Esophagus muscularis mucosa (tissue), 4 donors: ENCODE measurements at regions of chr10 and their contacts with region 1.

Region 1: GRCh38 chr10:79195091-79195923 is 126.5 kb downstream of the ZMIZ1 start:
- DNase-seq: peak; percentile 97
- H3K4me3 ChIP-seq: peak overlapping the region in 3 of 4 donors; percentile 22 to 25 (median 22)
- H3K27ac ChIP-seq: peak overlapping the region; percentile 72 to 83 (median 78)
- H3K4me1 ChIP-seq: peaks cover 45 to 68% (median 65%) of the 10 kb centered on the region in 4 donors
- H3K27me3 ChIP-seq: no peaks in the 10 kb centered on the region
- CTCF ChIP-seq: peak; percentile 89 to 95 (median 93)
- EP300 ChIP-seq: no peak
- POLR2A ChIP-seq: no peak

Region 2: DNA sequence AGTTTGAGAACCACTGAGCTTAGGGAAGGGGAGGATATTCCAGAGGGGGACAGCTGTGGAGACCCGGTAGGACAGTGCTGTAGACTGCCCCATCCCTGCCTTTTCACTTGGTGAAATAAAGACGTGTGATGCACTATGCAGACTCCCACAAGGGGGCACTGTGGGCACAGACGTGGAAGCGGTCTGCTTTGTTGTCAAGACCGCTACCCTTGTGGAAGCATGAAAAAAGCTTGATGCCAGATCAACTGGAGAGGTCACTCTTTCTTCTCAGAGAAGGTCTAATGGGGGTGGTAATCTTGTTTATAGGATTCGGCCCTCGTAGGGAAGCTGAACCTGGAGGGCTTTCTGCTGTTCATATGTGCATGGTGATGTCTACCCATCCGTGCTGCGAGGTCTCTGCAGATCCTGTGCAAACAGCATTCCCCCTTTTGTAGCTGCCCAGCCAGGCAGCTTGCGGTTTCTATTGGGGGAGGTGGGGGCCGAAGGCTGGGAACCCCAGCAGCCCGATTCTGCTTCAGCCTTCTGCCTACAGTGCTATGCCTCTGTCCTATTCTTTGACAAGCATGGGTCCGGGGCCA is 1147.9 kb before region 1 on chr10:
- intact Hi-C with region 1: loop called (anchors 2 kb)
- DNase-seq: peak; percentile 96
- H3K4me3 ChIP-seq: no peak overlapping the region
- H3K27ac ChIP-seq: no peak overlapping the region
- H3K4me1 ChIP-seq: peaks cover 10 to 21% (median 14%) of the 10 kb centered on the region in 4 donors
- H3K27me3 ChIP-seq: no peaks in the 10 kb centered on the region
- CTCF ChIP-seq: peak; percentile 89 to 94 (median 93)
- EP300 ChIP-seq: no peak
- POLR2A ChIP-seq: no peak

Region 3: DNA sequence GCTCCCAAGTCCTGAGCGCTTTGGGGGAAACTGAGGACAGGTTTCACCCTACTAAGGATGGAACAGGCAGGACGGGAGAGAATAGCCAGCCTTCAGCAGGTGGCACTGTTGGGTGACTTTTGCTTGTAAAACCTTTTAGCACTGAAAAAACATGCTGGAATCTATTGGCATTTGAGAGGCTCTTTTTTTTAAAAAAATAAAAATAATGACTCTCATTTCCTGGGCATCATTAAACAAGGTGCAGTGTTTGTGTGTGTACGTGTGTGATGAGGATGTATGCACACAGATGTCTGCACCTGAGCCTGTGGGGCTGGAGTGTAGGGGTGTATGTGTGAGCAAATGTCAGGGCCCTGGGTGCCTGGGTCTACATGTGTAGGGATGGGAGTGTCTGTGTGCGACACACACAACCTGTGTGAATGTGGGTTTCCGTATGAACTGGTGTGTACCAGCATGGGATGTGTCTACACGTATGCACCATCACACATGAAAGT is 983.7 kb before region 1 on chr10:
- intact Hi-C with region 1: loop called (anchors 5 kb)
- DNase-seq: no peak
- H3K4me3 ChIP-seq: no peak overlapping the region
- H3K27ac ChIP-seq: peak overlapping the region; percentile 45 to 64 (median 60)
- H3K4me1 ChIP-seq: peaks cover 31 to 41% (median 38%) of the 10 kb centered on the region in 4 donors
- H3K27me3 ChIP-seq: no peaks in the 10 kb centered on the region
- CTCF ChIP-seq: peak; percentile 50 to 71 (median 64)
- EP300 ChIP-seq: no peak
- POLR2A ChIP-seq: no peak

Region 4: GRCh38 chr10:78302989-78303854 is 892.1 kb before region 1 on chr10:
- intact Hi-C with region 1: loop called (anchors 5 kb)
- DNase-seq: peak; percentile 96
- H3K4me3 ChIP-seq: peak overlapping the region; percentile 63 to 67 (median 66)
- H3K27ac ChIP-seq: peak overlapping the region; percentile 88 to 92 (median 90)
- H3K4me1 ChIP-seq: peaks cover 11 to 46% (median 27%) of the 10 kb centered on the region in 4 donors
- H3K27me3 ChIP-seq: no peaks in the 10 kb centered on the region
- CTCF ChIP-seq: peak; percentile 51 to 78 (median 55)
- EP300 ChIP-seq: no peak
- POLR2A ChIP-seq: peak; percentile 10

Region 5: DNA sequence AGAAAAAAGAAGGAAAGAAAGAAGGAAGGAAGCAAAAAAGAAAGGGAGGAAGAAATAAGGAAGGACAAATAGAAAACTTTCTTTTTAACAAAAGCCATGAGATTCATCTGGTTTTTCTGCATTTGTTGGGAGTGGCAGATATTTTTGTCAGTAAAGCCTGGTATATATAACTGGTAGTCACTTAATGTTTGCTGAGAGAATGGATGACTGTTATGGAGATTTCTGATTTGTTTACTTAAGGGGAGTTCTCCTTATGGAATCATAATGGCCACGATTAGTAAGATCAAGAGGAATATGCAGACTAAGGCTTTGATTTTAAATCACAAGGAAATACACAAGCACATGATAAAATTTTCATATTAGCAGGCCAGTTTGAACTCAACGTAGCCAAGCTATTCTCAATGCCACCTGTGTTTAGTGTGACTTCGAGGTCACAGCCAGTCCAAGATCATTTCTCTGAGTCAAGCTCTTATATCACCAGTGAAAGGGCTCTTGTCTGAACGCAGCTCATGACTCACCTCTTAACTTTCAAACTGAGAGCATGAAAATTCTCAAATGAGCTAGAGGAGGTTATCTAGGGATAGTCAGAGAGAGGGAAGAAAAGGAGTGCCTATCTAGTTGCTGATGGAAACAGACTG is 571.6 kb before region 1 on chr10:
- intact Hi-C with region 1: no loop called
- DNase-seq: no peak
- H3K4me3 ChIP-seq: no peak overlapping the region
- H3K27ac ChIP-seq: peak overlapping the region in 2 of 4 donors; percentile 10 to 37
- H3K4me1 ChIP-seq: peaks cover 9 to 34% (median 15%) of the 10 kb centered on the region in 4 donors
- H3K27me3 ChIP-seq: no peaks in the 10 kb centered on the region
- CTCF ChIP-seq: no peak
- EP300 ChIP-seq: no peak
- POLR2A ChIP-seq: no peak

Region 6: DNA sequence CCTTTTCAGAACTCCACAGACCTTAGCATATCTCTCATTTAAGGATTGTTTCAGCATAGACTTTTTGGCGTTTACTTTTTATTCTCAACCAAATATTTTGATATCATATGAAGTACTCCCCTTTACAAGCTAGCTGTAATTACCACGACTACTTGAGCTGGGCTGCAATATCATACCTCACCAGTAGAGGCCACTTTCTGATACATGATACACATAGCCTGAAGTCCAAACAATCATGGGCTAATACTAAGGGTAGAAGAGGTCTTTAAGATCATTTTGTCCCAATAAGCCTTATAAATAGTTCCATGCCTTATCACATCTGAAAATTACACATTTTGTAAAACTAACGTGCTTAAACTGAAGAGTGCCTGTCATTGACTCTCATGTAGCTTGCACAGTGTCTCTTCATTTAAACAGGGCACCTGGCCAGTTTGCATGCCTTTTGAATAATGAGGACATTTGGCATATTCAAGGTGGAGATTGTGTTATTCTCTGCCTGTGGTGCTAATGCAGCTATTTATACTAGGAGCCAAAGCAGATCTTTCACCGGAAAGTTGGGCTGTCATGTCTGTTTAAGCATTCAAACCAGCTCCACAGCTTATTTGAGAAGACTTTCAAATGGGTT is 530.3 kb before region 1 on chr10:
- intact Hi-C with region 1: loop called (anchors 5 kb)
- DNase-seq: no peak
- H3K4me3 ChIP-seq: no peak overlapping the region
- H3K27ac ChIP-seq: peak overlapping the region in 2 of 4 donors; percentile 43 to 56
- H3K4me1 ChIP-seq: peaks cover 0 to 20% (median 14%) of the 10 kb centered on the region in 4 donors
- H3K27me3 ChIP-seq: no peaks in the 10 kb centered on the region
- CTCF ChIP-seq: peak; percentile 62 to 80 (median 67)
- EP300 ChIP-seq: no peak
- POLR2A ChIP-seq: no peak

Region 7: GRCh38 chr10:78817361-78817760 is 377.9 kb before region 1 on chr10:
- intact Hi-C with region 1: no loop called
- DNase-seq: no peak
- H3K4me3 ChIP-seq: no peak overlapping the region
- H3K27ac ChIP-seq: no peak overlapping the region
- H3K4me1 ChIP-seq: peaks cover 3 to 15% (median 8%) of the 10 kb centered on the region in 4 donors
- H3K27me3 ChIP-seq: no peaks in the 10 kb centered on the region
- CTCF ChIP-seq: no peak
- EP300 ChIP-seq: no peak
- POLR2A ChIP-seq: no peak

Region 8: GRCh38 chr10:78972947-78973900 is 222.1 kb before region 1 on chr10:
- intact Hi-C with region 1: loop called (anchors 10 kb)
- DNase-seq: peak; percentile 94
- H3K4me3 ChIP-seq: peak overlapping the region; percentile 63 to 66 (median 65)
- H3K27ac ChIP-seq: peak overlapping the region; percentile 94 to 99 (median 97)
- H3K4me1 ChIP-seq: peaks cover 38 to 67% (median 55%) of the 10 kb centered on the region in 4 donors
- H3K27me3 ChIP-seq: no peaks in the 10 kb centered on the region
- CTCF ChIP-seq: no peak
- EP300 ChIP-seq: no peak
- POLR2A ChIP-seq: peak; percentile 25

Region 9: GRCh38 chr10:79084012-79084971 is 111.0 kb before region 1 on chr10:
- intact Hi-C with region 1: no loop called
- DNase-seq: peak; percentile 99
- H3K4me3 ChIP-seq: no peak overlapping the region
- H3K27ac ChIP-seq: peak overlapping the region; percentile 73 to 81 (median 78)
- H3K4me1 ChIP-seq: peaks cover 99 to 100% (median 100%) of the 10 kb centered on the region in 4 donors
- H3K27me3 ChIP-seq: no peaks in the 10 kb centered on the region
- CTCF ChIP-seq: no peak
- EP300 ChIP-seq: no peak
- POLR2A ChIP-seq: no peak

Region 10: DNA sequence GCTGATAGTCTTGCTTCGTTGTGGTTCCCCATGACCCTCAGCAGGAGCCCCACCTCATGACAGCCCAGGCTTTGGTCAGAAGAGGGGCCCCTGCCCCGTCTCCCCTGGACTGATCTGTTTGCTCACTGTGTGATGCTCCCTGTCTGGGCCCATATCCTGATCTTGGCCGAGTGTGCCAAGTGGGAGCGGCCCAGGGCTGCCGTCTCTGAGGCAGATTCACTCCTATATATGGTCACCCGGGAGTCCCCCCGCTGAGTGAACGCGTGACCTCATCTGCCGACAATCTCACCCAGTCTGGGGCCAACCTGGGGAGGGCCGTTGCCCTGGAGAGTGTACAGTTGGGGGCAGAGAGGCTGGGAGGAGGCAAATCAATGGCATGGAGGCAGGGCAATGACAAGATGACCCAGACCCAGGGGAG is 186.5 kb after region 1 on chr10:
- intact Hi-C with region 1: no loop called
- DNase-seq: peak; percentile 95
- H3K4me3 ChIP-seq: no peak overlapping the region
- H3K27ac ChIP-seq: peak overlapping the region; percentile 87 to 93 (median 92)
- H3K4me1 ChIP-seq: peaks cover 43 to 75% (median 54%) of the 10 kb centered on the region in 4 donors
- H3K27me3 ChIP-seq: no peaks in the 10 kb centered on the region
- CTCF ChIP-seq: no peak
- EP300 ChIP-seq: no peak
- POLR2A ChIP-seq: no peak